Right cardiac atrium (tissue), 5 donors: ENCODE measurements at regions of chr1 and their contacts with region 1.

Region 1: DNA sequence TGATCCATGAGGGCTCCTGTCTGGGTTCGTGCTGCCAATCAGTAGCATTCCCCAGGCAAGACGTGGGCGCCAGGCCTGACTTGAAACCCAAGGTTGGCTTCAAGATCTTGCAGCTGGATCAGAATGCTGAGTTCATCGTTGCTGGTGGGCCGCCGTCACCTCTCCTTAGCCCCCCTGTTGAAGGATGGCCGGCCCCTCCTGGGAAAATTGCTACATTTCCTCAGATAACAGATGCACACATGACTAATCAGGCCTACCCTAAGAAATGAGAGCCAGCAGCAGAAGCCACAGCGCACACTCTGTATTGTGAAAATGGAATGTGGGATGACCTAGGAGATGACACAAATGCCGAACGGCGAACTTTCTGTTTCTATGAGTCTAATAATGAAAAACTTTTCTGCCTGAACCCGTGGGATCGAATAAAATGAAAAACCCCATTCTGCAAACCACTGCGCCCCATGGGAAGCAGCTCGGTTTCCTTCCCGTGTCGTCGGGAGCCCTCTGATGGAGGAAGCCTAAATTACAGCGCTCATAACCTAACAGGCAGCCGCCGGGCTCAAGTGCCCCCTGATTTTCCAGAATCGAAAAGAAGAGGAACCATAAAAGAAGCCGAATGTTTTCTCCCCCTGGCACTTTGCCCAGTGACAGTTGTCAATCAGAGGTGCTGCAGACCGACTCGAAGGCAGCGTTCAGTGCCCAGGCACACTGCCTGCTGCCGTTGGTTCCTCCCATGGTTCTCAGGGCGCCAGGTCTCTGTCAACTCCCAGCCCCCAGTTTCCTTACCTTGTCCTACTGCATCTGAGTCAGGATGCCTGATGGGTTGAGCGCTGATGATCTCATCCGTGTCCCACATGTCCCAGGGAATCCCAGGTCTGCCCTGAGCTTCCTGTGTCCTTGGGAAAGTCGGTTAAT is 38.2 kb upstream of the H6PD start:
- DNase-seq: peak; percentile 74 to 86 (median 80)
- ATAC-seq: peak; percentile 59 to 76
- H3K4me3 ChIP-seq: no peak overlapping the region
- H3K27ac ChIP-seq: no peak overlapping the region
- H3K4me1 ChIP-seq: peaks cover 3% of the 10 kb centered on the region
- H3K27me3 ChIP-seq: no peaks in the 10 kb centered on the region

Region 2: DNA sequence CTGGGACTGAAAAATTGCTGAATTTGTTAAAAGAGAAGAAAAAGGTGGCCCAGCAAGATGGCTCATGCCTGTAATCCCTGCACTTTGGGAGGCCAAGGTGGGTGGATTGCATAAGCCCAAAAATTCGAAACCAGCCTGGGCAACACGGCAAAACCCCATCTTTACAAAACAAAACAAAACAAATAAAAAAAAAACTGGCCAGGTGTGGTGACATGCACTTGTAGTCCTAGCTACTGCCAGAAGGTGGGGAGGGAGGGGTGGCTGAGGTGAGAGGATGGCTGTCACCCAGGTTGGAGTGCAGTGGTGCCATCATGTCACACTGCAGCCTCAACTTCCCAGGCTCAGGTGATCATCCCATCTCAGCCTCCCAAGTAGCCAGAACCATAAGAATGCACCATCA is 401.8 kb before region 1 on chr1:
- intact Hi-C with region 1: no loop called
- DNase-seq: no peak
- ATAC-seq: no peak
- H3K4me3 ChIP-seq: no peak overlapping the region
- H3K27ac ChIP-seq: no peak overlapping the region
- H3K4me1 ChIP-seq: no peaks in the 10 kb centered on the region
- H3K27me3 ChIP-seq: no peaks in the 10 kb centered on the region

Region 3: DNA sequence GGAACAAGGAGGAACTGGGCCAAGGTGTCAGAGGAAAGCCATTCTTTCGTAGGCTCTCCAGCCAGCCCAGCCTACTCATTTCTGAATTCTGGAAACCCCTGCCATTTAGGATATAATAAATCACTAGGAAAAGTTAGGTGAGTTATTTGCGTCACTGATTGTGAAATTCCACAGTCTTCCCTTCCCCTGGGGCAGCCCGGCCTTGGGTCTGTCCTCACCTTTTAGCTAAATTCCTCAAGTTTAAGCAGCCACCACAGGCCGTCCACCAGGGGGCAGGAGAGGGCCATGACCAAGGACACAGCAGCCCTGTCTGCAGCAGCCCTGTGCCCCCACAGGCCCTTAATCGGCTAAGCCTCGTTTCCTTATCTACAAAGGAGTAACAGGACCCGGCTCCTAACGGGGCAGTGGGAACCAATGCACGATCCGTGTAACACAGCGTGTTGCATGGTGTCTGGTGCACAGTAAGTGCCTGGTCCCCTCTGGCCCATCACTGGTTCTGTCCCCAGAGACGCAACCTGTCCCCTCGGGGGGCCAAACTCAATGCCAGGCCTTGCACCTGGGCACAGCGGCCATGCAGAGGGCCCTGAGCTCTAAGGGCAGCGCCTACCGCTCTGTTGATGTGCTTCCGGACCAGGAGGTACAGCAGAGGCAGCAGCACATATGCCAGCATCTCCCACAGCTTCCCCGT is 85.6 kb before region 1 on chr1:
- intact Hi-C with region 1: loop called (anchors 5 kb)
- DNase-seq: peak; percentile 89 to 96 (median 94)
- ATAC-seq: peak; percentile 70 to 85
- H3K4me3 ChIP-seq: no peak overlapping the region
- H3K27ac ChIP-seq: no peak overlapping the region
- H3K4me1 ChIP-seq: peaks cover 2% of the 10 kb centered on the region
- H3K27me3 ChIP-seq: no peaks in the 10 kb centered on the region

Region 4: DNA sequence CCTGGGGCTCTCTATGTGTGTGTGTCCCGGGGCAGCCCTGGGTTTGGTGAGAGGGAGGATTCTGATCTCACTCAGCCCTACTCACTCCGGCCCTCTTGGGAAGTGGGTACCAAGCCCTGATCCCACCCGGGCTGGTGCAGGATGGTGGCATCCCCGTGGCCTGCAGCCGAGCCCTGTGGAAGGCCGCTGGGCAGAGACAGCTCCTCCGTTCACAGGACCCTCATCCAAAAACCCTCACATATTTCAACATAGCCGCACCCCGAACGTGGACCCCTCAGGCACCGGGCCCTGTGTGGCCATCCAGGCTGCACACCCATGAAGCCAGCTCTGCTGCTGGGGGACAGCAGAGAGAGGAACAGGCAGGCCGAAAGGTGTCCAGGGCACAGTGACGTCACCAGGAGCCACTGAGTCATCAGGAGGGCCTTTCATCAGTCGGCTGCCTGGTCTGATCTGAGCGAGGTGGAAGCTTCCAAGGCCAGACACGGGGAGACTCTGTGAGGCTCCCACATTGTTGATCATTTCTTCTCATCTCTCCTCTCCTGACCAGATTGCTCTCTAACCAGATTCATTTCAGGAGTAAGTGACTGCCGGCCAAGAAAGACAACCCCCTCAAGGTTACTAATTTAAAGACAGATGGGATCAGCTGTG is 51.2 kb before region 1 on chr1:
- intact Hi-C with region 1: loop called (anchors 5 to 10 kb)
- DNase-seq: no peak
- ATAC-seq: no peak
- H3K4me3 ChIP-seq: no peak overlapping the region
- H3K27ac ChIP-seq: no peak overlapping the region
- H3K4me1 ChIP-seq: no peaks in the 10 kb centered on the region
- H3K27me3 ChIP-seq: no peaks in the 10 kb centered on the region